B cell (primary cell): ENCODE measurements at regions of chr9 and their contacts with region 1.

Region 1: GRCh38 chr9:124771021-124771866 is at the start of gene NR6A1:
- DNase-seq: peak; percentile 98
- ATAC-seq: peak; percentile 87
- H3K4me3 ChIP-seq: peak within 1 kb of the TSS; percentile 43 to 92 (median 77)
- H3K4me3 Mint-ChIP-seq: peak within 1 kb of the TSS; percentile 97
- H3K27ac ChIP-seq: peak within 1 kb of the TSS; percentile 62 to 68
- H3K27ac Mint-ChIP-seq: peak within 1 kb of the TSS; percentile 95
- H3K4me1 ChIP-seq: peaks cover 29 to 35% of the 10 kb centered on the region in 2 donors
- H3K4me1 Mint-ChIP-seq: peaks cover 39% of the 10 kb centered on the region
- H3K27me3 ChIP-seq: peaks cover 0 to 49% (median 46%) of the 10 kb centered on the region in 4 experiments
- H3K27me3 Mint-ChIP-seq: peaks cover 55% of the 10 kb centered on the region
- CTCF ChIP-seq: peak; percentile 43
- total RNA-seq, gene NR6A1: 0.66 and 0.67 TPM in 2 replicates

Region 2: GRCh38 chr9:124415102-124415851 is 356.0 kb before region 1 on chr9 and contains the start of gene PSMB7:
- CTCF ChIA-PET with region 1: no interaction called
- POLR2A ChIA-PET with region 1: no interaction called
- intact Hi-C with region 1: loop called (anchors 10 kb)
- DNase-seq: peak; percentile 98
- ATAC-seq: peak; percentile 96
- H3K4me3 ChIP-seq: peak within 1 kb of the TSS; percentile 81 to 89 (median 87)
- H3K4me3 Mint-ChIP-seq: peak within 1 kb of the TSS; percentile 98
- H3K27ac ChIP-seq: peak within 1 kb of the TSS; percentile 48 to 82
- H3K27ac Mint-ChIP-seq: peak within 1 kb of the TSS; percentile 90
- H3K4me1 ChIP-seq: peaks cover 6 to 27% of the 10 kb centered on the region in 2 donors
- H3K4me1 Mint-ChIP-seq: peaks cover 29% of the 10 kb centered on the region
- H3K27me3 ChIP-seq: no peaks in the 10 kb centered on the region
- H3K27me3 Mint-ChIP-seq: no peaks in the 10 kb centered on the region
- CTCF ChIP-seq: peak; percentile 89
- total RNA-seq, gene PSMB7: 69.7 and 73.1 TPM in 2 replicates

Region 3: GRCh38 chr9:124800306-124801259 is 29.3 kb after region 1 on chr9:
- CTCF ChIA-PET with region 1: interaction called, 17 read pairs
- POLR2A ChIA-PET with region 1: interaction called, 3 read pairs
- intact Hi-C with region 1: no loop called
- DNase-seq: peak; percentile 86
- ATAC-seq: peak; percentile 92
- H3K4me3 ChIP-seq: peak overlapping the region in 2 of 5 experiments; percentile 31 to 50
- H3K4me3 Mint-ChIP-seq: peak overlapping the region; percentile 77
- H3K27ac ChIP-seq: peak overlapping the region; percentile 84 to 94
- H3K27ac Mint-ChIP-seq: peak overlapping the region; percentile 96
- H3K4me1 ChIP-seq: peaks cover 39 to 46% of the 10 kb centered on the region in 2 donors
- H3K4me1 Mint-ChIP-seq: peaks cover 36% of the 10 kb centered on the region
- H3K27me3 ChIP-seq: peaks cover 0 to 3% (median 0%) of the 10 kb centered on the region in 4 experiments
- H3K27me3 Mint-ChIP-seq: no peaks in the 10 kb centered on the region
- CTCF ChIP-seq: no peak

Region 4: DNA sequence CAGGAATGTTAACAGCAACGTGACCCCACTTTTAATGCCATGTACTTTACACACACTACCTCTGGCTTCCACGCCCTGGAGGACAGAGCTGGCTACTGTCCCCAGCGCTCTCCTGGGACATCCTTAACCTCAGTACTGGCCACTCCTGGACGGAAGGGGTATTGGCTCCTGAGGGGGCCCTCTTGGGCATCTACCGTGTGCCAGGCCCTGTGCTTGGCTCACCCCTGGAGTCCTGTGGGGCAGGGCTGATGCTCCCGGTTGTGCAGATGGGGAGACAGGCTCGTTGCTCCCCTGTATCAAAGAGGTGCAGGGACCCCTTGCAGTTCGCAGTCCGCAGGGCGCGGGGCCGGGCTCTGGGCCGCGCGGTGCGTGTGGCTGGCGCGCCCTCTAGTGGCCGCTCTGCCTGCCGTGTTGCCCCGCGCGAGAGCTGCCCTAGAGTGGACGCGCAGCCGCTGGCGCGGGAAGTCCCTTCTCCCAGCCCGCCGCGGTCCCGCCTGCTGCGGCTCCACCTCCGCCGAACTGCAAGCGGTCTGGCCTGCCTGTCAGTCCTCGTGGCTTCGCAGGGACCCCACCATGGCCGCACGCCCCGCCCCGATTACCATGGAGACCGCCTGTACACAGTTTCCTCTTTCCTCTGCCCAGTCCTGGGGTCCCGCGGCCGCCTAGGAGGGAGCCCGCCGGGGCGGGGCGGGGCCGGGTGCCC is 81.7 kb after region 1 on chr9 and contains the start of gene WDR38:
- CTCF ChIA-PET with region 1: interaction called, 345 read pairs
- POLR2A ChIA-PET with region 1: interaction called, 5 read pairs
- intact Hi-C with region 1: loop called (anchors 1 kb)
- DNase-seq: peak; percentile 88
- ATAC-seq: peak; percentile 80
- H3K4me3 ChIP-seq: peak within 1 kb of the TSS in 4 of 5 experiments; percentile 33 to 55 (median 48)
- H3K4me3 Mint-ChIP-seq: peak within 1 kb of the TSS; percentile 88
- H3K27ac ChIP-seq: peak within 1 kb of the TSS in 1 of 2 donors; percentile 74
- H3K27ac Mint-ChIP-seq: peak within 1 kb of the TSS; percentile 84
- H3K4me1 ChIP-seq: peaks cover 7 to 9% of the 10 kb centered on the region in 2 donors
- H3K4me1 Mint-ChIP-seq: peaks cover 8% of the 10 kb centered on the region
- H3K27me3 ChIP-seq: no peaks in the 10 kb centered on the region
- H3K27me3 Mint-ChIP-seq: no peaks in the 10 kb centered on the region
- CTCF ChIP-seq: peak; percentile 99
- total RNA-seq, gene WDR38: not detected in 2 replicates

Region 5: GRCh38 chr9:124894741-124895170 is 123.5 kb after region 1 on chr9:
- CTCF ChIA-PET with region 1: interaction called, 23 read pairs
- POLR2A ChIA-PET with region 1: no interaction called
- intact Hi-C with region 1: loop called (anchors 1 kb)
- DNase-seq: peak; percentile 61
- ATAC-seq: peak; percentile 53
- H3K4me3 ChIP-seq: no peak overlapping the region
- H3K4me3 Mint-ChIP-seq: no peak overlapping the region
- H3K27ac ChIP-seq: no peak overlapping the region
- H3K27ac Mint-ChIP-seq: no peak overlapping the region
- H3K4me1 ChIP-seq: no peaks in the 10 kb centered on the region
- H3K4me1 Mint-ChIP-seq: peaks cover 4% of the 10 kb centered on the region
- H3K27me3 ChIP-seq: no peaks in the 10 kb centered on the region
- H3K27me3 Mint-ChIP-seq: no peaks in the 10 kb centered on the region
- CTCF ChIP-seq: peak; percentile 53

Region 6: GRCh38 chr9:125143375-125144090 is 372.3 kb after region 1 on chr9 and contains the start of gene SCAI:
- CTCF ChIA-PET with region 1: interaction called, 4 read pairs
- POLR2A ChIA-PET with region 1: no interaction called
- intact Hi-C with region 1: loop called (anchors 1 kb)
- DNase-seq: peak; percentile 98
- ATAC-seq: peak; percentile 98
- H3K4me3 ChIP-seq: peak within 1 kb of the TSS; percentile 41 to 70 (median 60)
- H3K4me3 Mint-ChIP-seq: peak within 1 kb of the TSS; percentile 98
- H3K27ac ChIP-seq: peak within 1 kb of the TSS in 1 of 2 donors; percentile 2
- H3K27ac Mint-ChIP-seq: peak within 1 kb of the TSS; percentile 88
- H3K4me1 ChIP-seq: peaks cover 9% of the 10 kb centered on the region in 2 donors
- H3K4me1 Mint-ChIP-seq: peaks cover 19% of the 10 kb centered on the region
- H3K27me3 ChIP-seq: no peaks in the 10 kb centered on the region
- H3K27me3 Mint-ChIP-seq: no peaks in the 10 kb centered on the region
- CTCF ChIP-seq: peak; percentile 96
- total RNA-seq, gene SCAI: 19.8 and 21.4 TPM in 2 replicates

Region 7: GRCh38 chr9:125241000-125241862 is 470.0 kb after region 1 on chr9 and contains the start of gene HSPA5:
- CTCF ChIA-PET with region 1: no interaction called
- POLR2A ChIA-PET with region 1: interaction called, 4 read pairs
- intact Hi-C with region 1: loop called (anchors 2 kb)
- DNase-seq: peak; percentile 100
- ATAC-seq: peak; percentile 90
- H3K4me3 ChIP-seq: peak within 1 kb of the TSS; percentile 82 to 98 (median 92)
- H3K4me3 Mint-ChIP-seq: peak within 1 kb of the TSS; percentile 95
- H3K27ac ChIP-seq: peak within 1 kb of the TSS; percentile 98 to 99
- H3K27ac Mint-ChIP-seq: peak within 1 kb of the TSS; percentile 93
- H3K4me1 ChIP-seq: peaks cover 16 to 26% of the 10 kb centered on the region in 2 donors
- H3K4me1 Mint-ChIP-seq: peaks cover 50% of the 10 kb centered on the region
- H3K27me3 ChIP-seq: no peaks in the 10 kb centered on the region
- H3K27me3 Mint-ChIP-seq: no peaks in the 10 kb centered on the region
- CTCF ChIP-seq: no peak
- total RNA-seq, gene HSPA5: 40.1 and 42.6 TPM in 2 replicates